Heart right ventricle (tissue), 16 donors: ENCODE measurements at regions of chr10 and their contacts with region 1.

Region 1: GRCh38 chr10:931416-932318 is at the start of gene LARP4B:
- DNase-seq: peak; percentile 96 to 98
- ATAC-seq: peak; percentile 98 to 100 (median 100)
- H3K4me3 ChIP-seq: peak within 1 kb of the TSS; percentile 31 to 86 (median 74)
- H3K27ac ChIP-seq: peak within 1 kb of the TSS; percentile 91 to 99 (median 98)
- H3K4me1 ChIP-seq: peaks cover 5 to 43% (median 36%) of the 10 kb centered on the region in 9 donors
- H3K27me3 ChIP-seq: no peaks in the 10 kb centered on the region
- CTCF ChIP-seq: no peak
- total RNA-seq, gene LARP4B: 58.7 to 82.6 (median 65.8) TPM

Region 2: DNA sequence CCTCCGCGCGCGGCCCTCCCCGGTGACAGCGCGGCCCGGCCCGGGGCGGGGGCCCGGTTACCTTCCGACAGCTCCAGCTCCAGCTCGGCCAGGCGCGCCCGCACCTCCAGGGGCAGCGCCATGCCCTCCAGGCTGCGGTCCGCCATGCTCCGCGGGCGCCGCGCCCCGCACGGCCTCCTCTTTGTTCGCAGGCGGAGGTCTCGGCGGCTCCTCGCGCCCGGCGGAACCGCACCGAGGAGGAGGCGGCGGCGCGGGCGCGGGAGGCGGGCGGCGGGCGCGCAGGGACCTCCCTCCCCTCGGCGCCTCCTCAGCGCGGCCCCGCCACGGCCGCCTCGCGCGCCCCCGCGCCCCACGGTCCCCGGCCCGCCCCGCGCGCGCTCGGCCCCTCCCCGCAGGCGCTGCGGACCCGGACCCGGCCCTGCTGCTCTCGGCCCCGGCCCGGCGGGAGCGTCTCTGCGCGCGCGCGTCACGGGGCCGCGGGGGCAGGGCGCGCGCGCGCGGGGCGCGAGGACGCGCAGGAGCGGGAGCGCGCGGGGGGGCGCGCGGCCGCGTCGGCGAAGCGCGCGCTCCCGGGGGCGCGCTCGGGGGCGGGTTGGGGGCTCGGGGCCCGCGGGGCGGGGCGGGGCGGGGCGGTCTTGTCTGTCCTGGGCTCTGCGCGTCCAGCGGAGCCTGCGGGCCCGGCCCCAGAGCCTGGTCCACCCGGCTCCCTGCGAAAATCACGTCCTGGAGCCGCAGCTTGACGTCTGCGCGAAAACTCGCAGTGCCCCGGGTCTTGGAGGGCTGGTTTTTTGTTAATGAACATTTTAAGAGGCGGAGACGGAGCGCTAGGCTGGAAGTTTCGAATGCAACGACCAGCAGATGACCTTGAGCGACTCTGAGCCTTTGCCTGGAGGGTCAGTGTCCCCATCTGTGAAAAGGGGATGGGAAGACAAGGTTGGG is 242.0 kb before region 1 on chr10 and contains the start of gene DIP2C:
- intact Hi-C with region 1: loop called in 1 of 10 experiments (anchors 5 kb)
- DNase-seq: peak; percentile 72 to 81
- ATAC-seq: peak; percentile 74 to 90 (median 83)
- H3K4me3 ChIP-seq: peak within 1 kb of the TSS; percentile 62 to 92 (median 84)
- H3K27ac ChIP-seq: peak within 1 kb of the TSS; percentile 77 to 94 (median 88)
- H3K4me1 ChIP-seq: peaks cover 5 to 24% (median 16%) of the 10 kb centered on the region in 9 donors
- H3K27me3 ChIP-seq: peaks cover 0 to 12% (median 0%) of the 10 kb centered on the region in 7 donors
- CTCF ChIP-seq: no peak
- total RNA-seq, gene DIP2C: 27.6 to 48.2 (median 35.4) TPM

Region 3: GRCh38 chr10:865257-865656 is 66.4 kb before region 1 on chr10:
- intact Hi-C with region 1: loop called in 3 of 10 experiments (anchors 5 to 10 kb)
- DNase-seq: no peak
- ATAC-seq: no peak
- H3K4me3 ChIP-seq: no peak overlapping the region
- H3K27ac ChIP-seq: peak overlapping the region in 3 of 10 donors; percentile 2 to 75 (median 7)
- H3K4me1 ChIP-seq: peaks cover 5 to 49% (median 42%) of the 10 kb centered on the region in 9 donors
- H3K27me3 ChIP-seq: no peaks in the 10 kb centered on the region
- CTCF ChIP-seq: no peak

Region 4: DNA sequence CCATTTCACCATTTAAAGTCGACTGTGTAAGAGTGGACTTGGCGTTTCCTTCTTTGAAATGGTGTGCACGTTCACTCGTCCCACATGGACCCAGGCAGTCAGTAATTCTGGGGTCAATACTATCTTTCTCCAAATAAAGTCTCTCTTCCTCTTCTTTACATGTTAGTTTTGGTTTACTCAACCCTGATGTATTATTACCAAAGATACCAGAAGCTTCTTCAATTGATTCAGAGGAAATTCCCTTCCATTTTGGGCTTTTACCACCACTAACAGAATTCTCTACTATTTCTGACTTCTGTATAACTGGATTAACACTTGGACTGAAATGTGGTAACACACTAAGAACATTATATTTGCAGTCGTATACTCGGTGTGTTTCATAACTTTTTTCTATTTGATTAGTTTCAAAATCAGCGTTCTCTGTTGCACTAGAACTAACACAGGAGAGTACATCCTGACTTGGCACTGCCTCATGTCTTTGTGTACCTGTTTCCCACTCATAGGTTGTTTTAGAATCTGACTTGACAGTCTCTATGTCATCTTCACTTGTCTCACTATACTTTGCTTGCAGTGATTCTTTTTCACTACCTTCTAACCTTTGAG is 61.0 kb before region 1 on chr10:
- intact Hi-C with region 1: loop called in 3 of 10 experiments (anchors 5 to 10 kb)
- DNase-seq: no peak
- ATAC-seq: no peak
- H3K4me3 ChIP-seq: no peak overlapping the region
- H3K27ac ChIP-seq: peak overlapping the region in 5 of 10 donors; percentile 8 to 73 (median 61)
- H3K4me1 ChIP-seq: peaks cover 5 to 70% (median 48%) of the 10 kb centered on the region in 9 donors
- H3K27me3 ChIP-seq: no peaks in the 10 kb centered on the region
- CTCF ChIP-seq: no peak

Region 5: GRCh38 chr10:987870-988666 is 56.4 kb after region 1 on chr10 and contains the start of gene GTPBP4:
- intact Hi-C with region 1: loop called in 6 of 10 experiments (anchors 5 to 10 kb)
- DNase-seq: peak; percentile 98 to 99
- ATAC-seq: peak; percentile 98 to 100 (median 99)
- H3K4me3 ChIP-seq: peak within 1 kb of the TSS; percentile 56 to 90 (median 80)
- H3K27ac ChIP-seq: peak within 1 kb of the TSS; percentile 86 to 97 (median 94)
- H3K4me1 ChIP-seq: peaks cover 9 to 39% (median 29%) of the 10 kb centered on the region in 9 donors
- H3K27me3 ChIP-seq: no peaks in the 10 kb centered on the region
- CTCF ChIP-seq: peak in 6 of 9 donors; percentile 7 to 57 (median 38)
- total RNA-seq, gene GTPBP4: 25.0 to 41.4 (median 29.4) TPM

Region 6: DNA sequence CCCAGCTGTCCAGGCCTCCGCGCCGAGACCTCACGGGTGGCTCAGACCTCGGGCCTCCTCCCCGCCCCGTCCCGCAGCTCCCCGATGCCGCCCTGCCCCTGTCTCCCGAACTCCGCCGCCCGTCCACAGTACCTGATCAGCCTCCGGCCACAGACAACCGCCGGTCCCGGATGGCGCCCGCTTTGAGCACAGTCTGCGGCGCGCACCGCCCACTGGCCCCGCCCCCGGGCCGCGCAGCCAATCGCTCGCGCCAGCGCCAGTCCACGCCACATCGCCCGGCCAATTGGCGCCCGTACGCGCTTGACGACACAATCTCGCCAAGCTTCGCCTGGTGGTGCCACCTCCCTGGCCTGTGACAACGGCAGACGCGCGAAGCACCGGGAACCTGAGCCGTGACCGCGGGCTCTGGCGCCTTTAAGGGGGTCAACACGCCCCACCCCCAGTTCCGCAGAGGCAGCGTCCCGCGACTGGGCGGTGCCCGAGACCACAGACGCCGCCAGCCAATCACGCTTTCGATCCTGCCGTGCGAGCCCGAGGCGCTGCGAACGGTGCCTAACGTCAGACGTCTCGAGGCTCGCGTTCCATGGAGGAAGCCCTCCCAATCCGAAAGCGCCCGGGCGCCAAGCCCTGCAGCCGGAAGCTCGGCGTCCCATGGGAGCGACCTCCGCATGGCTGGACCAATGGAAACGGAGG is 117.2 kb after region 1 on chr10 and contains the start of gene IDI1:
- intact Hi-C with region 1: loop called in 2 of 10 experiments (anchors 10 kb)
- DNase-seq: peak; percentile 97 to 98
- ATAC-seq: peak; percentile 94 to 97 (median 96)
- H3K4me3 ChIP-seq: peak within 1 kb of the TSS; percentile 59 to 93 (median 83)
- H3K27ac ChIP-seq: peak within 1 kb of the TSS; percentile 94 to 100 (median 98)
- H3K4me1 ChIP-seq: peaks cover 0 to 72% (median 52%) of the 10 kb centered on the region in 9 donors
- H3K27me3 ChIP-seq: no peaks in the 10 kb centered on the region
- CTCF ChIP-seq: peak in 1 of 9 donors; percentile 11
- total RNA-seq, gene IDI1: 14.4 to 21.9 (median 18.9) TPM

Region 7: DNA sequence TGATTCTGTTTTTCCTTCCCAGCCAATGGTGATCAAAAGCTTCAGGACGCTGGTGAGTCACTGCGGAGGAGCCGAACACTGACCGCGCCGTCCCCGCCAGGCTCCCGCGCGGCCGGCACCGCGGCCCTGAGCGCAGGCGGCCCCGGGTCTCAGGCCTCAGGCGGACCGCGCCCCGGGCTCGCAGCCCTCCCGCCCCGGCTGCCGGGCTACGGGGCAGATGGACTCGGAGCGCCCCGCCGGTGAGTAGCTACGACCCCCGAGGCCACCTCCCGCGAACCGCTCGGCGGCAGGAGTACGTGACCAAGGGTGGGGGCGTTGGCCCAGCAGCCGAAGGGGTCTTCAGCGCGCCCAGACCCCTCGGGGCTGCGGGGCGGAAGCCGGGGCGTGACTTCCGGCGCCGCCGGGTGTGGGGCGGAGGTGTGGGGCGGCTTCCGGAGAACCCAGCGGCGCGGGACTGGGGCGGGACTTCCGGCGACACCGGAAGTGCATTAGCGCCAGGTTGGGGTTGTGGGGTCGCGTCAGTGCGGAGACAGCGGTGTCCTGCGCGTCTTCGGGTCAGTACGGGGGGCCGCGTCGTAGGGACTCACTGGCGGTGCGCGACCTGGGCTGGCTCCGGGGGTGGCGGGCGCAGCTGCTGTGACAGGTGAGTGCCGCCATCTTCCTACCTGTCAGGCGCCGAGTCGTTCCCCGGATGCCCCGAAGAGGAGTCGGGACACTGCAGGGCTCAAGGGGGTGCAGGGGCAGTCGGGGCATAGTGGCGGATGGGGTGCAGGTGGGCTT is 124.8 kb after region 1 on chr10 and contains the start of gene WDR37:
- intact Hi-C with region 1: loop called in 1 of 10 experiments (anchors 10 kb)
- DNase-seq: peak; percentile 88 to 93
- ATAC-seq: peak; percentile 94 to 98 (median 96)
- H3K4me3 ChIP-seq: peak within 1 kb of the TSS; percentile 54 to 97 (median 91)
- H3K27ac ChIP-seq: peak within 1 kb of the TSS; percentile 92 to 100 (median 99)
- H3K4me1 ChIP-seq: peaks cover 8 to 82% (median 65%) of the 10 kb centered on the region in 9 donors
- H3K27me3 ChIP-seq: no peaks in the 10 kb centered on the region
- CTCF ChIP-seq: no peak
- total RNA-seq, gene WDR37: 25.0 to 36.5 (median 32.6) TPM